PC-9 (cell line): ENCODE measurements at regions of chr4 and their contacts with region 1.

Region 1: GRCh38 chr4:47926639-47927258 is 12.4 kb upstream of the NFXL1 start:
- DNase-seq: peak in 1 of 2 experiments; percentile 18
- H3K4me3 ChIP-seq: no peak overlapping the region
- H3K27ac ChIP-seq: no peak overlapping the region
- H3K4me1 ChIP-seq: no peaks in the 10 kb centered on the region
- H3K27me3 ChIP-seq: no peaks in the 10 kb centered on the region
- CTCF ChIP-seq: peak; percentile 40

Region 2: DNA sequence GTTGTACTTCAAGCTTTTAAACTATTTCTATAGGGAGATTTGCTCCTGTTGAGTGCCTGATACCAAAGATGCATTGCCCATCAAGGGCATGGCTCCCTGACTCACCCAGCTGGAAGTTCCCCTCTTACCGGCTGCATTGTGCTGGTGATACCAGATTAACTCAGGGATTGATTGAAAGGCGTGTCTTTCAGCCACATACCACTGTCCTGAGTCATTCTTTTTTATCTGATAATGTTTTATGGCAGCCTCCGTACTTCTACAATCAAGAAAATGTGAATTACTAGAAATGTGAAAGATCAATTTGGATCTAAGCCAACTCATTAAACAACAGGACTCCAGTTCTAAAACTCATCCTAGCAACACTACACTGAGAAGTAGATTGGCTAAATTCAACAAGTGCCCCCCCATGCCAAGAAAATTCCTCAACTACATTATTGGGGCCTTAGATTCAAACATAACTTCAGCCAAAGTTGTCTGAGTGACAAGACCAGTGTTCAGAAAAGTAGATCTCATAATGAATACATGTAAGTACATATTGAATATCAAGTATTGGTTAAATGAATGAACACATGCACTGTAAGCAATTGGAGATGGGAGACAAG is 167.3 kb after region 1 on chr4:
- CTCF ChIA-PET with region 1: interaction called, 3 read pairs
- POLR2A ChIA-PET with region 1: no interaction called
- intact Hi-C with region 1: loop called (anchors 5 kb)
- DNase-seq: peak; percentile 74 to 86
- H3K4me3 ChIP-seq: no peak overlapping the region
- H3K27ac ChIP-seq: peak overlapping the region; percentile 62
- H3K4me1 ChIP-seq: peaks cover 18% of the 10 kb centered on the region
- H3K27me3 ChIP-seq: no peaks in the 10 kb centered on the region
- CTCF ChIP-seq: no peak